Caco-2 (cell line): ENCODE measurements at regions of chr16 and their contacts with region 1.

Region 1: DNA sequence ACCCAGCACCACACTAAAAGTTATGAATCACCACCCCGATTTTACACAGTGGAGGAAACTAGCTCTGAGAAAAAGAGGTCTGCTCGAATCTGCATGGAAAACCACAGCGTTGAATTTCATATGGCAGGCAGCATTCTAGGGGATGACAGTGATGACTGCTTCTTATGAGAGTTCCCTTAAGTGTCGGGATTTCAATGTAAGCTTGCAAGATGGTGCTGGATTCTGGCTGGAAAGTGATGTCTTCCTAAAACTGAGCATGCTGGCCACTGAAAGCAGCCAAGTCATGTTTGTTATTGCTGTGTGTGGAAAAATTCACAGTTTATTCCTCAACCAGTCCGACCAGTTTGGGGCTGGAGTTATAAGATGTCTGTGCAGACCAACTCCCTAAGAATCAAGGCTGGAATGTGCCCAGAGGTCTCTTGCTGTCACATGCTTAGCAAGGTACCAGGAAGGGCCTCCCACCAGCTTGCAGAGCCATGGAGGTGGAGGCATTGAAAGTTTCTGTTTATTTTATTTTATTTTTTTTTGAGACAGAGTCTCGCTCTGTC is 37.2 kb upstream of the GAN start:
- DNase-seq: peak; percentile 87 to 92
- H3K4me3 ChIP-seq: no peak overlapping the region
- H3K4me3 Mint-ChIP-seq: no peak overlapping the region
- H3K27ac Mint-ChIP-seq: peak overlapping the region; percentile 95
- H3K4me1 ChIP-seq: peaks cover 59% of the 10 kb centered on the region
- H3K4me1 Mint-ChIP-seq: peaks cover 37% of the 10 kb centered on the region
- H3K27me3 ChIP-seq: no peaks in the 10 kb centered on the region
- H3K27me3 Mint-ChIP-seq: no peaks in the 10 kb centered on the region
- CTCF ChIP-seq: no peak

Region 2: GRCh38 chr16:81293909-81294823 is 16.6 kb after region 1 on chr16:
- CTCF ChIA-PET with region 1: no interaction called
- POLR2A ChIA-PET with region 1: no interaction called
- intact Hi-C with region 1: loop called (anchors 2 kb)
- DNase-seq: no peak
- H3K4me3 ChIP-seq: no peak overlapping the region
- H3K4me3 Mint-ChIP-seq: no peak overlapping the region
- H3K27ac Mint-ChIP-seq: peak overlapping the region; percentile 3
- H3K4me1 ChIP-seq: peaks cover 13% of the 10 kb centered on the region
- H3K4me1 Mint-ChIP-seq: peaks cover 16% of the 10 kb centered on the region
- H3K27me3 ChIP-seq: no peaks in the 10 kb centered on the region
- H3K27me3 Mint-ChIP-seq: no peaks in the 10 kb centered on the region
- CTCF ChIP-seq: no peak